AG04450 (cell line): ENCODE measurements at regions of chr5 and their contacts with region 1.

Region 1: DNA sequence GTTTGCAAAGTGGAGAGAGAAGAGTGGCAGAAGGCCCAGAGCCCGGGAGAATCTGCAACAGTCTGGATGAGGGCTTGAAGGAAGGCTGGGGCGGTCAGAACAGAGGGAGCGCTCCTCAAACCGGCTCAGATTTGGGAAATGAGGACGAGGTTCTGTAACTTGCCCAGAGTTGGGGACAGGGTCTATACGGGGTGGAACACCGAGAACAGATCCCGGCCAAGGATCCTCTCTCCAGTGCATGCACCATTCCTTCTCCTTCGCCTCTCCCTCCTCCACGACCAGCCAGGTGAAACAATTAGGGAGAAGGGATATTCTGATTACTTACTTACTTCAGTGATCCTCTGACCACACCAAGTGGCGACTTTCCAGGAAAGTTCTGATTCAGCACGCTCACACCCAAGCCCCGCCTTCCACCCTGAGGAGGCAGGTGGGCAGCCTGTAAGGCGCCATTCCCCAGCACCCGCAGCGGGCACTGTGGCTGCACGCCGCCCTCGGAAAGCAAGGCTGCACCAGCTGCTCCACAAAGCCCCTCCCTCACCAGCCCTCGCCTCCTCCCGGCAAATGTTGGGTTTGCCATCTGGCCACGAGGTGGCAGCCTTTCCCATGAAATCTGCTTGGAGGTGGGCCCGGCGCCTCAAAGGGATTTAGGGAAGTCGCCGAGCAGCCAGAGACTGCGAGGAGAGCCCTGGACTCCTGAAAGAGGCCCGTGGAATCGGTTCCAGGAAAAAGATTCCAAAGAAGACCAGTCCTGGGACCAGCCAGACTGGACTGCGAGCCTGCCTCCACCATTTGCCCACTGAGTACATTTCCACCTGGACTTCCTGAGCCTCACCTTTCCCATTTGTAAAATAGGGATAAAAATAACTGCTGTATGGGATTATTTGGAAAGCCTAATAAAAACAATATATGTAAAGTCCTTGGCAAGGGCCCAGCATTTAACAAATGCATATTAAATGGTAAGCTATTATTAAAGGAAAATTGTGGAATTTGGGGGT is 22.2 kb upstream of the WWC1 start:
- DNase-seq: peak; percentile 60
- H3K4me3 ChIP-seq: peak overlapping the region; percentile 58
- H3K27ac ChIP-seq: no peak overlapping the region
- H3K27me3 ChIP-seq: peaks cover 7% of the 10 kb centered on the region
- CTCF ChIP-seq: peak; percentile 87

Region 2: GRCh38 chr5:168282120-168282519 is 12.9 kb after region 1 on chr5:
- CTCF ChIA-PET with region 1: interaction called, 26 read pairs
- POLR2A ChIA-PET with region 1: interaction called, 3 read pairs
- DNase-seq: peak; percentile 51
- H3K4me3 ChIP-seq: no peak overlapping the region
- H3K27ac ChIP-seq: no peak overlapping the region
- H3K27me3 ChIP-seq: peaks cover 11% of the 10 kb centered on the region
- CTCF ChIP-seq: no peak

Region 3: DNA sequence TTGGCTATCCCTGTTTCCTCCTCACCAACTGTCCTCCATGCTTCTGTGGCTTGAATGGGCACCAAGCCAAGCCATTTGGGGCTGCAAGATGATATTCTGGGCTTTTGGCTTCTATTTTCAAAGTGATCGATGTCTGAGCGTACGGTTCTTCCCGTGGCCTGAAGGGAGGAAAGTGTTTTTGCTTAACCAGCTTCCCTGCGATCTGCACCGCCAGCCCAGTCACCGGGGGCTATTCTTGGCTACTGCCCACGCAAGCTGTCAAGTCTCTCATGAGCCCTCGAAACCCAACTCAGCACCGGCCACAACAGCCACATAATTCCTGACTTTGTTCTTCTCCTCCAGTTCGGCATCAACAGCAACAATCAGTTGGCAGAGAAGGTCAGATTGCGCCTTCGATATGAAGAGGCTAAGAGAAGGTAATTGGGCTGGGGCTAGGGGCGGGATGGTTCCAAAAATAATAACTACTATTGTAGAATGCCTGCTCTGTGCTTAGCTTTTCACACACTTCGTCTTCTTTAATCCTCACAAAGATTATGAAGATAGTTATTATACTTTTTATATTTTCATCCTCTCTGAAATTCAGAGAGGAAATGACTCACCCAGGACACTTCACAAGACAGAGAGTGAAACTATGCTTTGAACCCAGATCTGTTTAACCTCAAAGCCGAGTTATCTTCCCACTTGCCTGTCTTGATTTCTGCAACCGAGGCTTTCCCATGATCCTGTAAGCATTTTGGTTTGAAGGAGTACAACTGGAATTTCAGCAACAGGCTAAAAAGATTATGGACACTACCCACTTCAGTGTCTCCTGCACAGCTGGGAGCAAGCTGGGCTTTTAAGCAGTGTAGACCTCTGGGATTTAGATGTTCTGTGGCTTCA is 140.6 kb after region 1 on chr5:
- CTCF ChIA-PET with region 1: interaction called, 21 read pairs
- POLR2A ChIA-PET with region 1: no interaction called
- DNase-seq: peak; percentile 46
- H3K4me3 ChIP-seq: no peak overlapping the region
- H3K27ac ChIP-seq: peak overlapping the region; percentile 61
- H3K27me3 ChIP-seq: no peaks in the 10 kb centered on the region
- CTCF ChIP-seq: no peak

Region 4: DNA sequence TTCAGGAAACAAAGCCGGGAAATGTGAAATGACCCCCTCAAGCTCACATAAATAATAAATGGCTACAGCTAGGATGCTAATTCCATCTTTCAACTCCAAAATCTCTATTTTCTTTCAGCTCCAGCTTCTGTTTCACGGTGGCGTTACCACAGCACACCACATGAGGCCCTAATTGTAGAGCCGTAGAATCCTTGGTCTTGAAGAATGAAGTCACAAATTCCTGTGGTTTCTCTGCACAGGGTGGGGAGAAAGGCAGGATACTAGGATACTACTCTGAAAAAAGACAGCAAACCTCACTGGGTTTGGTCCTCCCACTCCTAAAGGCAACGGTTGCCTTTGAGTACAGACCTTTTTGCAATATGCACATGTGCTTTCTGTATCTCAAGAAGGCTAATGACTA is 203.1 kb after region 1 on chr5:
- CTCF ChIA-PET with region 1: interaction called, 12 read pairs
- POLR2A ChIA-PET with region 1: no interaction called
- DNase-seq: peak; percentile 86
- H3K4me3 ChIP-seq: no peak overlapping the region
- H3K27ac ChIP-seq: peak overlapping the region; percentile 74
- H3K27me3 ChIP-seq: no peaks in the 10 kb centered on the region
- CTCF ChIP-seq: peak; percentile 53

Region 5: DNA sequence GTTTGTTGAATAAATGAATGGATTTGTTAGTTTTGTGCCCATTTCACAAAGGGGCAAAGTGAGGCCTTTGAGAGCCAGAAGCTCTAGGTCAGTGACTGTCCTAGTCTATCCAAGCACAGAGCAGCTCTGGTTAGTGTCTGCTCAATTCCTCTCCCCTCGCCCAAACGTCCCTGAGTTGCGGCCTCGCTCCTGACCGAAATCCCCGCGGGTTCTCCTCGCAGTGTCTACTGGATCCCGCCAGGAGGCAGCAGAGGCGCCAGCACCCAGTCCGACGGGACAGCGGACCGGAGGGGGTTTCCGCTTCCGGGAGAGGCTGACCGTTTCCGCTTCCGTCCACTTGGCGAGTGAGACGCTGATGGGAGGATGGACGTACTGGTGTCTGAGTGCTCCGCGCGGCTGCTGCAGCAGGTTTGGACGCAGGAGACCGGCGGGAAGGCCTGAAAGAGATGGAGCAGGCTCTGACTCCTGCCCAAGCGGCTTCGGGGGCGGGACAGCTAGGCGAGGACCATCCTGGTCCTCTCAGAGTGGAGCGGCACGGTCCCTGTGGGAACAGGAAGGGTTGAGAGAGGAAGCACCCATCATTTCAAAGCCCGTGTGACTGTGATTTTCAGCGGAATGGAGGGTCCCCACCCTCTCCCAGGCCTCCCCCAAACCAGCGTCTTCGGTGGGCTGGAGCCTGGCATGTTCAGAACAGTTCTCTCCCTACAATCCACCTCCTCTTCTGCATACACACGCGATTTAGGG is 217.1 kb after region 1 on chr5 and contains the start of gene RARS1:
- CTCF ChIA-PET with region 1: interaction called, 104 read pairs
- POLR2A ChIA-PET with region 1: no interaction called
- DNase-seq: peak; percentile 86
- H3K4me3 ChIP-seq: peak within 1 kb of the TSS; percentile 76
- H3K27ac ChIP-seq: peak within 1 kb of the TSS; percentile 57
- H3K27me3 ChIP-seq: no peaks in the 10 kb centered on the region
- CTCF ChIP-seq: peak; percentile 98
- polyA plus RNA-seq, gene RARS1: 112 and 147 TPM in 2 replicates